IMR-90 (cell line): ENCODE measurements at regions of chr4 and their contacts with region 1.

Region 1: GRCh38 chr4:15027921-15028435 is 25.7 kb downstream of the CPEB2 start:
- DNase-seq: no peak
- ATAC-seq: no peak
- H3K4me3 ChIP-seq: no peak overlapping the region
- H3K27ac ChIP-seq: no peak overlapping the region
- H3K4me1 ChIP-seq: peaks cover 5% of the 10 kb centered on the region; the same call in 1 of the 2 replicates
- H3K27me3 ChIP-seq: no peaks in the 10 kb centered on the region
- CTCF ChIP-seq: no peak
- POLR2A ChIP-seq: no peak
- RAD21 ChIP-seq: no peak

Region 2: DNA sequence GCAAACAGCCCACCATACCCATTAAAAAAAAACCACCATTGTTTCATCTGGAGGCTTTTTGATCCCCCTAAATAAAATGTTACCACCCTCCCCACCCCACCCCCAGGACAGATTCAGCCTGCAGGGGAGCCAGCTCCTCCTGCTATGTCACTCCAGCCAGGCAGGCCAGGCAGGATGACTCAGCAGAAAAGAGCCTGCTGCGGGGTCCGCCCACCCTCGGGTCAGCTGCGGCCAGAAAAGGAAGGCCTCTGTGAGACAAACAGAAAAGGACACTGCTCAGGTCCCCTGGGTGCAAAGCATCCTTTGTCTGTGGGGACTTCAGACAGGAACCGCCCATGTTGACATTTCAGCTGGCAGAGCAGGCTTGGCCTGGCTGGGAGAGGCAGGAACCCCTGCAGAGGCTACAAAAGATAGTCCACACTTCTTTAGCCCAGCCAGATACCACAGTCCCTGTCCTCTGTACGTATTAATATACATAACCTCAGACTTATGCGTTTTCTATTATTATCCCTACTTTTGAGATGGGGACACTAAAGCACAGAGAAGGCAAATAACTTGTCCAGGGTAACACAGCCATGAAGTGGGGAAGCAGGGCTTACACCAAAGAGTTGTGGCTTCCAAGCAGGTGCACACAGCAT is 122.0 kb after region 1 on chr4:
- CTCF ChIA-PET with region 1: interaction called, 3 read pairs
- POLR2A ChIA-PET with region 1: interaction called, 11 read pairs
- dilution Hi-C with region 1: no loop called
- in situ Hi-C with region 1: no loop called
- intact Hi-C with region 1: no loop called
- DNase-seq: peak; percentile 76
- ATAC-seq: peak; percentile 98
- H3K4me3 ChIP-seq: no peak overlapping the region
- H3K27ac ChIP-seq: peak overlapping the region; percentile 88
- H3K4me1 ChIP-seq: peaks cover 13% of the 10 kb centered on the region
- H3K27me3 ChIP-seq: no peaks in the 10 kb centered on the region
- CTCF ChIP-seq: peak; percentile 17; the same call in 1 of the 2 replicates
- POLR2A ChIP-seq: no peak
- RAD21 ChIP-seq: no peak